HCT116 (cell line): ENCODE measurements at regions of chr2 and their contacts with region 1.

Region 1: DNA sequence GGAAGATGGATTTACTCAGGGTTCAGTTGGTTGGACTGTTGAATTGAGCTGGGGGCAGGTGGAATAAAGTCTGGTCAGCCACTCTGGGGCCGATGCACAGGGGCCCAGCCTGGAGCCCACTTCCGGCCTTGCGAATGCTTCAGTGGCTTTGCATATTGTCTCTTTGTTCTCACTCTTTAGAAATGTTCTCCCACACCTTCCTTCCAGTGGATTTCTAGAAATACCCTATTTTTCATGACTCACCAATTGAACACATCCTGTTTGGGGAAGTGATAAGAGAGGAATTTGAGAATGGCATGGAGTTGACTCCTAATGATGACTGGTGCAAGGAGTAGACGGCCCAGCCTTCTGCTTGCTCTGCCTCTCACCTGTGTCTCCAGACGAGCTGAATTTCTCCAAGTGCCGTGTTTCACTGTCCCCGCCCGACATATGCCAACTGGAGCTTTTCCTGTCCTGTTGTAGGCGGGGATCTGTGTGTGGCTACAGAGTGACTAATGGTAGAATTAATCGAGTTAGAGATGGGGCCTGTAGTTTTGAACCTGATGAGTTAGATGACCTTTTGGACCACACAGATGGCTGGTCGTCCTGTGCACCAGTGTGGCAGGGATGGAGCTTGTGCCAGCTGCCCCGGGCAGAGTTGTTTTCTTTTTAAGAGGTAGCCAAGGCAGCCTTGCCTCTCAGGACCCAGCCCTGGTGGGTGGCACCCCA is 28.2 kb downstream of the ASAP2 start:
- DNase-seq: peak; percentile 86
- ATAC-seq: peak; percentile 72
- H3K4me3 ChIP-seq: peak overlapping the region; percentile 7 to 31; a peak in 2 of 4 replicates
- H3K27ac ChIP-seq: peak overlapping the region; percentile 81
- H3K4me1 ChIP-seq: peaks cover 67% of the 10 kb centered on the region in 2 experiments
- H3K27me3 ChIP-seq: peaks cover 14% of the 10 kb centered on the region; the same call in 1 of the 2 replicates
- CTCF ChIP-seq: no peak
- POLR2A ChIP-seq: no peak
- RAD21 ChIP-seq: peak; percentile 28; the same call in 1 of the 2 replicates

Region 2: DNA sequence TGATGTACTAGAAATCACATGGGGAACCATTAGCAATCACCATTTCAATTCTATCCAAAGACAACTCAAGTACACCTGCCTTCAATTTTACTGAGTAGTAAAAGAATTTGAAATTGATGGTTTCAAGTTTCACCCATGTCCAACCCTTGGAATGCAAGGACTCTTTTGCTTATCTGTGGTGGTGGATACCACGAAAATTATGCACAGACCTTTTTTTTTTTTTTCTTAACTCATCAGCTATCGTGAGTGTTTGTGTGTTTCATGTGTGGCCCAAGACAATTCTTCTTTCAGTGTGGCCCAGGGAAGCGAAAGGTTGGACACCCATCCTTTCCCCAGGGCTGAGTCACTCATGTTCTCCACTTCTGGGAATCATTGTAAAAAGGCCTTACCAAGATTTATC is 529.9 kb before region 1 on chr2:
- CTCF ChIA-PET with region 1: no interaction called
- POLR2A ChIA-PET with region 1: no interaction called
- RAD21 ChIA-PET with region 1: no interaction called
- intact Hi-C with region 1: no loop called
- DNase-seq: no peak
- ATAC-seq: no peak
- H3K4me3 ChIP-seq: no peak overlapping the region
- H3K27ac ChIP-seq: no peak overlapping the region
- H3K4me1 ChIP-seq: no peaks in the 10 kb centered on the region
- H3K27me3 ChIP-seq: no peaks in the 10 kb centered on the region
- CTCF ChIP-seq: no peak
- POLR2A ChIP-seq: no peak
- RAD21 ChIP-seq: no peak

Region 3: DNA sequence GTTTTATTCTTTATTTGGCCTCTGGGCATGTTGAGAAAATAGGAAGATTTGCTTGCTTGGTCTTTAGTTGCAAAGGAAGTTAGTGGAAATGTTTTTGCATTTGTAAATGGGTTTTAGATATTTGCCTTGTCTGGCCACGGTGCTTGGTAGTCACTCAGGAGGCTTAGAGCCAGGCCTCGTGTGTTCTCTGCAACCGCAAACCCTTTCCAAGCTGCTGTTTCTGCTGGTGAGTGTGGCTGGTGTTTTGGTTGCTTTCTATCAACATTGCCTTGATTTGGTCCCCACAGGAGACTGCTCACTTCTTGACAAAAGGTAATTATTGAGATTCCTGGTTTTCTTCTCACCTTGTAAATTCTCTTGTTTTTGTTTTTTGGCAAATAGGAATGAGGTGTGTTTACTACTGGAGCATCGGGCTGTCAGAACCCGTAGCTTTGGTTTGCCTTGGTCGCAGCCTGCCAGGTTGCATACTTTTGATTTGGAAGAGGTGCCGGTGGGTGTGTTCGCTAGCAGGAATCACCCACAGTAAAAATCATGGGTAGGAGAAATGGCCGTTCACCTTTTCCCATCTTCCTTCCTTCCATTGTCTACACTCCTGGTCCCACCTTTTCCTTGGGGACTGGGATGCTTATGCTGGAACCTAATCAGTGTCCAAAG is 12.5 kb before region 1 on chr2:
- CTCF ChIA-PET with region 1: no interaction called
- POLR2A ChIA-PET with region 1: interaction called, 19 read pairs
- RAD21 ChIA-PET with region 1: no interaction called
- intact Hi-C with region 1: no loop called
- DNase-seq: no peak
- ATAC-seq: no peak
- H3K4me3 ChIP-seq: no peak overlapping the region
- H3K27ac ChIP-seq: no peak overlapping the region
- H3K4me1 ChIP-seq: peaks cover 0 to 2% of the 10 kb centered on the region in 2 experiments; a peak in 1 of 4 replicates
- H3K27me3 ChIP-seq: no peaks in the 10 kb centered on the region
- CTCF ChIP-seq: no peak
- POLR2A ChIP-seq: no peak
- RAD21 ChIP-seq: no peak

Region 4: GRCh38 chr2:9280224-9280623 is 45.4 kb after region 1 on chr2:
- CTCF ChIA-PET with region 1: no interaction called
- POLR2A ChIA-PET with region 1: no interaction called
- RAD21 ChIA-PET with region 1: no interaction called
- intact Hi-C with region 1: no loop called
- DNase-seq: no peak
- ATAC-seq: no peak
- H3K4me3 ChIP-seq: no peak overlapping the region
- H3K27ac ChIP-seq: no peak overlapping the region
- H3K4me1 ChIP-seq: peaks cover under 1 to 28% of the 10 kb centered on the region in 2 experiments; a peak in 3 of 4 replicates
- H3K27me3 ChIP-seq: no peaks in the 10 kb centered on the region
- CTCF ChIP-seq: no peak
- POLR2A ChIP-seq: no peak
- RAD21 ChIP-seq: no peak